AG04450 (cell line): ENCODE measurements at regions of chr13 and their contacts with region 1.

Region 1: DNA sequence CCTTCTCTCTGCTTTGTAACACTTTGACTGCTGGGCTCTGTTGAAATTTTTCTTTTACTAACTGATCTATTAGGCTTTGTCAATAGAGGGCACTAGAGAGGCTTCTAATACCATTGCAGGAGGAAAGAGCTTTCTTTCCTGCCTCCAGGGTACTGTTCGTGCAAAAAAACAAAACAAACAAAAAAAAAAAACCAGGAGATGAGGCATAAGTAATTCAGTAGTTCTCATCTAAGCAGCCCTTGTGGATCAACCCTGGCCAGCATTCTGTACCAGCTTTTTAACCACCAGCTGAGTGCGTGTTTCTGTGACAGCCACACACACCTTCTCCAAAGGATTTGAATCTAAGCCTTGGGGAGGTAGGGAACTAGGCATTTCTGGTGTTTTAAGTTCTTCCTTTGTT is 1707.6 kb upstream of the SLC10A2 start:
- DNase-seq: peak; percentile 21
- H3K4me3 ChIP-seq: no peak overlapping the region
- H3K27ac ChIP-seq: no peak overlapping the region
- H3K27me3 ChIP-seq: no peaks in the 10 kb centered on the region
- CTCF ChIP-seq: peak; percentile 78

Region 2: GRCh38 chr13:104404325-104404724 is 369.4 kb before region 1 on chr13:
- CTCF ChIA-PET with region 1: no interaction called
- POLR2A ChIA-PET with region 1: no interaction called
- DNase-seq: no peak
- H3K4me3 ChIP-seq: no peak overlapping the region
- H3K27ac ChIP-seq: no peak overlapping the region
- H3K27me3 ChIP-seq: no peaks in the 10 kb centered on the region
- CTCF ChIP-seq: no peak

Region 3: GRCh38 chr13:104757712-104758111 is 16.1 kb before region 1 on chr13:
- CTCF ChIA-PET with region 1: interaction called, 16 read pairs
- POLR2A ChIA-PET with region 1: no interaction called
- DNase-seq: no peak
- H3K4me3 ChIP-seq: no peak overlapping the region
- H3K27ac ChIP-seq: no peak overlapping the region
- H3K27me3 ChIP-seq: no peaks in the 10 kb centered on the region
- CTCF ChIP-seq: no peak

Region 4: GRCh38 chr13:104784891-104785290 is 11.1 kb after region 1 on chr13:
- CTCF ChIA-PET with region 1: interaction called, 11 read pairs
- POLR2A ChIA-PET with region 1: no interaction called
- DNase-seq: no peak
- H3K4me3 ChIP-seq: no peak overlapping the region
- H3K27ac ChIP-seq: no peak overlapping the region
- H3K27me3 ChIP-seq: no peaks in the 10 kb centered on the region
- CTCF ChIP-seq: no peak